Activated B cell treated with CpG ODN at 0.5 μM for 24 hours (primary cell): ENCODE measurements at regions of chr16 and their contacts with region 1.

Region 1: DNA sequence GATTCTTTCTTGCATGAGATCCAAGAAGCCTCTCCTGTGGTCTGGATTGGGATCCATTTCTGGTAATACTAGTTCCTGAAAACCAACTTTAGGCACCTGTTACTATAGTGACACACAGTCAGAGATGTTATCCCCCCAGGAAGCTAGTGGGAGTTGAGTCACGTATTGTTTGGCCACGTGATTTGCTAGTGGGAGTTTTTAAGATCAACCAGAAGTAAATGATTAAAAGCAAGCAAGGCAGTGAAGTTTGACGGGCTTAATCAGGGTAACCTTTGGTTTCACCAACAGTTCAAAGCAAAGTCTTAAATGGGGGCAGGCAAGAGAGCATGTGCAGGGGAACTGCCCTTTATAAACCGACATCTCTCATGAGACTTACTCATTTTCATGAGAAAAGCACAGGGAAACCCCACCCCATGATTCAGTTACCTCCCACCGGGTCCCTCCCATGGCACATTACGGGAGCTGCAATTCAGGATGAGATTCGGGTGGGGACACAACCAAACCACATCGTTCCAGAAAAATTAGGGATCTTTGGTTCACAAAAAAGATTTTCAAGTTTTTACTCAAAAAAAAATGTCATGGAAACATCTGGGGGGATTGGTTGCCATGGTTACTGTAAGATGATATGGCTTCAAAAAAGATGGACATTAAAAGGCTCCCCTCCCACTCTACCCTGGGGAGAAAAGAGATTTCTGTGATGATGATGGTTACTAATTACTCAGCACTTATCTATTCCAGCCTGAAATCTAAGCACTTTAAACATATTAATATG is 483.1 kb upstream of the ERCC4 start:
- DNase-seq: no peak
- ATAC-seq: peak; percentile 88
- H3K4me3 Mint-ChIP-seq: no peak overlapping the region
- H3K27ac Mint-ChIP-seq: peak overlapping the region; percentile 77
- H3K4me1 Mint-ChIP-seq: peaks cover 11% of the 10 kb centered on the region
- H3K27me3 Mint-ChIP-seq: no peaks in the 10 kb centered on the region
- CTCF ChIP-seq: no peak

Region 2: DNA sequence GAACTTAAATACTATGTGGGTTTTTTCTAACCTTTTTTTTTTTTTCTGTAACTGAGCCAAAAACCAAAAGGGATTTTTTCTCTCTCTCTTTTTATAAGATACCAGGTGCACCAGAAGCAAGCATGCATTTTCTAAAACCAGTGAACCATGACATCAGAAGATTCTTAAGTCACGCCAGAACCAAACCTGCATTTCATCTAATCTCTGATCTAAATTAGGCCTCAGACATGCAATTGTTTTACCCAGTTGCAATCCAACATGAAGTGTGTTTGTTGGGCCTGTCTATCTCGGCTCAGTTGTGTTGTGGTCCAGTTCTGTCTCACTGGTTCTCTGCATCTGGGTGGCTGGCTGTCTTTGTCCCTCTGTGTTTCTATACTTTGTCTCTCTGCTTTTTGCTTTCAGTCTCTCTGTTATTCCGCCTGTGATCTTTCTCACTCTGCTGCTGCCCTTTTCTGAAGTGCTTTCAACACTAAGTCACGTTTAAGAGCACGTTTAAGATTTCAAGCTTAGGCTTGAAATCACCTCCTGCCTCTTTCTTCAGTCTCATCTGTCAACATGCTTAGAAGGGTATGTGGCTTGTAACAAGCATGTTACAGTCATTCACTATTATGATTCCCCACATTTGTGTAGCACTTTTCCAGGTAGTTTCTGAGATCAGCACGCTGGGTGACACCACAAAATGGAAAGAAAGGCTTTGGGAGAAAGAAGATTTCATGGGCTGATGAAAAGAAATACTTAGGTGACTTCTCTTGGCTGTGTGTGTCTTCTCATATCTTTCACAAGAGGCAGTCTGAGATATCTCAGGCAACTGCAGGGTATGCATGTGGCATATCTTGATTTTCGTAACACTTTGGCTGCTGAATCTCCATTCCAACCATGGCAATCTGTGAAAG is 46.5 kb before region 1 on chr16:
- CTCF ChIA-PET with region 1: no interaction called
- POLR2A ChIA-PET with region 1: no interaction called
- intact Hi-C with region 1: loop called (anchors 1 kb)
- DNase-seq: no peak
- ATAC-seq: peak; percentile 72
- H3K4me3 Mint-ChIP-seq: peak overlapping the region; percentile 42
- H3K27ac Mint-ChIP-seq: peak overlapping the region; percentile 78
- H3K4me1 Mint-ChIP-seq: peaks cover 31% of the 10 kb centered on the region
- H3K27me3 Mint-ChIP-seq: no peaks in the 10 kb centered on the region
- CTCF ChIP-seq: no peak

Region 3: DNA sequence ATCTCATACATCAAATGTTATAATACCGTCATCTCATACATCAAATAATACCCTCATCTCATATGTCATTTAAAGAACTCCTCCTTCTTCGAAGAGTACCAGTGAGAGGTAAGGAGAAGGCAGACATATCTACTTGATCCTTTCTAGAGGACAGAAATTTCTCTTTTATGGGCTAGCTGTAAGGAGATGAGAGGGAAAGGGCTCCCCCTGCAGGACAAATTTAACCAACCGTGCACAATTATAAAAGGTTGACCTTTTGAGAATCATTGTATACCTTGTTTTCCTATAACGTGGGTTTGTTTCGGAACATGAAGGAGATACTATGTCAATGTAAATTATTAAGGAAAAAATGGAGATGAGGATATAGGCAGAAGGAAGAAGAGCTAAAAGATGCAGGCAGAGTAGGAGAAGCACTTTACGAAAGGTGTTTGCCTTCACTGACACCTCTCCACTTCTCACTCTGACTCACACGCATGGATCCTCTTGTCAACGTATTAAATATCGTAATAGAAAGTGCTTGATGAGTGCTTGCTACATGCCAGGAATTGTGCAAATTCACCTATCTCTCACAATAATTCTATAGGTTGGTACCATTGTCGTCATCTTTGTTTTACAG is 17.2 kb after region 1 on chr16:
- CTCF ChIA-PET with region 1: no interaction called
- POLR2A ChIA-PET with region 1: no interaction called
- intact Hi-C with region 1: no loop called
- DNase-seq: no peak
- ATAC-seq: no peak
- H3K4me3 Mint-ChIP-seq: no peak overlapping the region
- H3K27ac Mint-ChIP-seq: no peak overlapping the region
- H3K4me1 Mint-ChIP-seq: no peaks in the 10 kb centered on the region
- H3K27me3 Mint-ChIP-seq: no peaks in the 10 kb centered on the region
- CTCF ChIP-seq: no peak